Activated naive CD4-positive, alpha-beta T cell treated with anti-CD3 and anti-CD28 coated beads, Interleukin-2, amount 10 ng/mL, durations not matched to agents 7 days and 5 days (primary cell): ENCODE measurements at regions of chr6 and their contacts with region 1.

Region 1: GRCh38 chr6:85482905-85483700 is 33.2 kb downstream of the NT5E start:
- DNase-seq: peak; percentile 83
- H3K4me3 Mint-ChIP-seq: no peak overlapping the region
- H3K27ac Mint-ChIP-seq: no peak overlapping the region
- H3K4me1 Mint-ChIP-seq: peaks cover 7% of the 10 kb centered on the region
- H3K27me3 Mint-ChIP-seq: peaks cover 14% of the 10 kb centered on the region

Region 2: GRCh38 chr6:85354761-85355618 is 128.1 kb before region 1 on chr6:
- CTCF ChIA-PET with region 1: interaction called, 112 read pairs
- DNase-seq: peak; percentile 69
- H3K4me3 Mint-ChIP-seq: no peak overlapping the region
- H3K27ac Mint-ChIP-seq: no peak overlapping the region
- H3K4me1 Mint-ChIP-seq: no peaks in the 10 kb centered on the region
- H3K27me3 Mint-ChIP-seq: peaks cover 8% of the 10 kb centered on the region

Region 3: GRCh38 chr6:85401186-85402021 is 81.7 kb before region 1 on chr6:
- CTCF ChIA-PET with region 1: interaction called, 11 read pairs
- DNase-seq: no peak
- H3K4me3 Mint-ChIP-seq: no peak overlapping the region
- H3K27ac Mint-ChIP-seq: no peak overlapping the region
- H3K4me1 Mint-ChIP-seq: peaks cover 29% of the 10 kb centered on the region
- H3K27me3 Mint-ChIP-seq: peaks cover 8% of the 10 kb centered on the region

Region 4: DNA sequence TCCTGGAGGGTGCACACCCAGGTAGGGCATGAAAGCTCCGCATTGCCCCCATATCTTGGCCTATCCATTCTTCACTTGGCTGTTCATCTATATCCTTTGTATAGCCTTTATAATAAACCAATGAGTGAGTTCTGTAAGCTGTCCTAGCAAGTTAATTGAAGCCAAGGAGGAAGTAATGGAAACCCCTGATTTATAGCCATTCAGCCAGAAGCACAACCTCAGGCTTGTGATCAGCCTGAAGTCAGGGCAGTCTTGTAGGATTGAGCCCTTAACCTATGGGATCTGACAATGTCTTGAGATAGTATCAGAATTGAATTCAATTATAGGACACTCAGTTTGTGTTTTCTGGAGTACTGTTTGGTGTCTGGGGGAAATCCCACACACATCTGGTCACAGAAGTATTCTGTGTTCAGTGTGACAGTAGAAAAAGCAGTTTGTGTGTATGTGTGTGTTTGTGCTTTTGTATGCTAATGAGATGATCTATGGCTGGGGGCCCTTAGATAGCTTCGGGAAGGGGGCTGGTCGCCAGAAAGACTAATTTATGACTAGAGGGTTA is 27.6 kb before region 1 on chr6:
- CTCF ChIA-PET with region 1: interaction called, 51 read pairs
- DNase-seq: no peak
- H3K4me3 Mint-ChIP-seq: no peak overlapping the region
- H3K27ac Mint-ChIP-seq: no peak overlapping the region
- H3K4me1 Mint-ChIP-seq: peaks cover 50% of the 10 kb centered on the region
- H3K27me3 Mint-ChIP-seq: peaks cover 54% of the 10 kb centered on the region

Region 5: GRCh38 chr6:85468261-85468660 is 14.8 kb before region 1 on chr6:
- CTCF ChIA-PET with region 1: interaction called, 12 read pairs
- DNase-seq: no peak
- H3K4me3 Mint-ChIP-seq: no peak overlapping the region
- H3K27ac Mint-ChIP-seq: no peak overlapping the region
- H3K4me1 Mint-ChIP-seq: peaks cover 21% of the 10 kb centered on the region
- H3K27me3 Mint-ChIP-seq: peaks cover 12% of the 10 kb centered on the region